Endothelial cell of umbilical vein (primary cell): ENCODE measurements at regions of chr11 and their contacts with region 1.

Region 1: GRCh38 chr11:126647735-126648134 is 292.2 kb downstream of the ST3GAL4 start:
- DNase-seq: no peak
- H3K4me3 ChIP-seq: no peak overlapping the region
- H3K27ac ChIP-seq: no peak overlapping the region
- H3K4me1 ChIP-seq: no peaks in the 10 kb centered on the region
- H3K27me3 ChIP-seq: no peaks in the 10 kb centered on the region
- CTCF ChIP-seq: no peak
- POLR2A ChIP-seq: no peak

Region 2: DNA sequence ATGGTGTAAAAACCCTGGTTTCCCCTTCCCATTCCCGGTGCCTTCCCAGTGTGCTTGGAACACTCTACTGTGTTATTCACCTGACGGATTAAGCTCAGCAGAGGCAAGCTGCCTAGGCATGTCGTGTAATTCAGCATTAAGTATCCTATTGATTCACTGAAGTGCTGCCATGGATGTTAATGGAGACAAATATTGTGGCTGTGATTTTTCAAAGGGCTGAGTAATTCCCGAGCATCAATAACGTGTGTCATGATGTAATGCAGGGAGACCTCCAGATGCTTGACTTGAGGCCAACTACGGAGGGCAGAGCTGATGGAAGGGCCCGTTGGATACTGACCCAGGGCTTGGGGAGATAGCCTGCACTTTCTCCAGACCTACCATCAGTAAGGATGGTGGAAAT is 23.2 kb before region 1 on chr11:
- CTCF ChIA-PET with region 1: no interaction called
- POLR2A ChIA-PET with region 1: no interaction called
- dilution Hi-C with region 1: no loop called
- intact Hi-C with region 1: loop called (anchors 1 kb)
- DNase-seq: no peak
- H3K4me3 ChIP-seq: no peak overlapping the region
- H3K27ac ChIP-seq: no peak overlapping the region
- H3K4me1 ChIP-seq: no peaks in the 10 kb centered on the region
- H3K27me3 ChIP-seq: no peaks in the 10 kb centered on the region
- CTCF ChIP-seq: no peak
- POLR2A ChIP-seq: no peak